Activated CD4-positive, alpha-beta memory T cell treated with anti-CD3 and anti-CD28 coated beads for 36 hours (primary cell): ENCODE measurements at regions of chr5 and their contacts with region 1.

Region 1: DNA sequence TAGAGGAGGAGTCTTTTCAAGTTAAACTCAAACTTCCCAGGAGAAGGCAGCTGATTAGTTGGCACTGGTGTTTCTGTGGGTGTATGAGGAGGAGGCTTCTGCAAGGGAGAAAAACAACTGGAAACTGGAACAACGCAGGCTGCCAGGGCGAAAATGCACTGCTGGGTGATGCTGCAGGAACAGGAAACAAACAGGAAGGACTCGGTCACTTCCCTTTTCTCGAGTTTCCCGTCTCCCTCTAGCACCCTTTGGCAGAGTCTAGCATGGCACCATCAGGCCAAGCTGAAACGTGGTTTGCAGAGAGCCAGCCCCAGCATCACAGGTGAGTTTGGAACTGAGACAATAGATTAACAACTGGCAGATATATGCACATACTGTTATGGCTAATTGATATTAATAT is 77.5 kb upstream of the CAST start:
- DNase-seq: no peak
- H3K4me3 Mint-ChIP-seq: no peak overlapping the region
- H3K27ac Mint-ChIP-seq: no peak overlapping the region
- H3K4me1 Mint-ChIP-seq: peaks cover 8% of the 10 kb centered on the region
- H3K27me3 Mint-ChIP-seq: peaks cover 19% of the 10 kb centered on the region

Region 2: DNA sequence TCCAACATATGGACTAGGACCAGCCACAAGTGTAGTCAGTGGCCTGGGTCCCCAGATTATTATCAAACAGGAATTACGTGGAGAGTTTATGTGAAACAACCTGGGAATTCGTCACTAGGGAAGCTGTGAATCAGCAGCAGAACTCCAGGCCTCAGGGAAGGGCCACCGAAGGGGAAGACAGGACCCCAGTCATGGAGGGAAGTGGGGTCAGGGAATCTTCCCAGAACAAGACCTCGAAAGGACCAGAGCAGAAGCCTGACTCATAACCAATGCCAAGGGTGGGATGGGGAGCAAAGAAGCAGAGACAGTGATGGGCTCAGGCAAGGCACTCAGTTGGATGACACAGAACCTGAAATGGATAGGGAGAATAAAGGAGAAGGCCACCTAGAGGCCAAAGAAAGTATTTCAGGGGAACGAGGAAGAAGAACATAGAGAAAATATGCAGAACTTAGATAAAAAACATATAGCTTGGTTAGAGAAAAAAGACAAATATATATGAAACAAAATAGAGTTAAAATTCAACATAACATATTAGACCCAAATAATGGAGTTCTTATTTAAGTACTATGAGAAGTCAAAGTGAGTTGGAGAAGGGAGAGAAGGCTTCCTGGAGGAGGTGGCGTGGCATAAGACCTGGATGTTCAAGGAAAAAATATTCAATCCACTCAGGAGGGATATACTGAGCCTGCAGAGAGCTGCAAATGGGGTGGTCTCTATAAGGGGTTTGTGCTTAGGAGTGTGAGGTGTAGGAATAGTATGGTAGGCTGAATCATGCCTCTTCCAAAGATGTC is 10.8 kb after region 1 on chr5:
- CTCF ChIA-PET with region 1: interaction called, 19 read pairs
- POLR2A ChIA-PET with region 1: no interaction called
- intact Hi-C with region 1: no loop called
- DNase-seq: no peak
- H3K4me3 Mint-ChIP-seq: no peak overlapping the region
- H3K27ac Mint-ChIP-seq: no peak overlapping the region
- H3K4me1 Mint-ChIP-seq: peaks cover 13% of the 10 kb centered on the region
- H3K27me3 Mint-ChIP-seq: peaks cover 3% of the 10 kb centered on the region